Activated CD4-positive, alpha-beta T cell treated with anti-CD3 and anti-CD28 coated beads for 36 hours (primary cell): ENCODE measurements at regions of chr3 and their contacts with region 1.

Region 1: GRCh38 chr3:39189959-39190269 is 2.5 kb downstream of the XIRP1 start:
- DNase-seq: peak; percentile 72
- ATAC-seq: peak; percentile 64
- H3K4me3 Mint-ChIP-seq: no peak overlapping the region
- H3K27ac Mint-ChIP-seq: no peak overlapping the region
- H3K4me1 Mint-ChIP-seq: peaks cover 28% of the 10 kb centered on the region
- H3K27me3 Mint-ChIP-seq: no peaks in the 10 kb centered on the region

Region 2: GRCh38 chr3:38811822-38812221 is 378.1 kb before region 1 on chr3:
- CTCF ChIA-PET with region 1: no interaction called
- POLR2A ChIA-PET with region 1: no interaction called
- intact Hi-C with region 1: no loop called
- DNase-seq: no peak
- ATAC-seq: no peak
- H3K4me3 Mint-ChIP-seq: no peak overlapping the region
- H3K27ac Mint-ChIP-seq: no peak overlapping the region
- H3K4me1 Mint-ChIP-seq: no peaks in the 10 kb centered on the region
- H3K27me3 Mint-ChIP-seq: peaks cover 13% of the 10 kb centered on the region

Region 3: DNA sequence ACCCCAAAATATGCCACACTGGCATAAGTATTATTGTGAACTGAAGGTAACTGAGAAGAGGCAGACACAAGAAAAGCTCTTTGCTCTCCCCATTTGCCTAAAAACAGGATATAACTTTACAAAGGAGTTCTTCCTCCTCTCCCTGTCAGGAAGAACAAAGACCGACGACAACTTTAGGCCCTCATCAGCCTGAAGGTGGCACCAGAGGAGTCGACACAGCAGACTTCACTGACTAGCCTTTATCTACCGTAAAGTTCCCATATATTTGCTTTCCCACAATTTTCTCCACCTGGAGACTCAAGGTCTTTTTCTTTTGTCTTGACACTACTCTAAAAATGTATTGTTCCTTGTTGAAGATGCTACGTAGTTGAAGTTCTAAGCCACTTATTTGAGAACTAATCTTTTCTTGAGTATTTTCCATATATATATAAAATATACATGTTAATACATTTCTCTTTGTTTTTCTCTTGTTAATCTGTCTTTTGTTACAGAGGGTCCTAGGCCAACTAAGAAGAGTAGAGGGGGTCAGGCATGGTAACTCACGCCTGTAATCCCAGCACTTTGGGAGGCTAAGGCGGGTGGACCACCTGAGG is 18.6 kb after region 1 on chr3:
- CTCF ChIA-PET with region 1: interaction called, 17 read pairs
- POLR2A ChIA-PET with region 1: no interaction called
- intact Hi-C with region 1: no loop called
- DNase-seq: peak; percentile 61
- ATAC-seq: no peak
- H3K4me3 Mint-ChIP-seq: no peak overlapping the region
- H3K27ac Mint-ChIP-seq: no peak overlapping the region
- H3K4me1 Mint-ChIP-seq: peaks cover 7% of the 10 kb centered on the region
- H3K27me3 Mint-ChIP-seq: no peaks in the 10 kb centered on the region

Region 4: DNA sequence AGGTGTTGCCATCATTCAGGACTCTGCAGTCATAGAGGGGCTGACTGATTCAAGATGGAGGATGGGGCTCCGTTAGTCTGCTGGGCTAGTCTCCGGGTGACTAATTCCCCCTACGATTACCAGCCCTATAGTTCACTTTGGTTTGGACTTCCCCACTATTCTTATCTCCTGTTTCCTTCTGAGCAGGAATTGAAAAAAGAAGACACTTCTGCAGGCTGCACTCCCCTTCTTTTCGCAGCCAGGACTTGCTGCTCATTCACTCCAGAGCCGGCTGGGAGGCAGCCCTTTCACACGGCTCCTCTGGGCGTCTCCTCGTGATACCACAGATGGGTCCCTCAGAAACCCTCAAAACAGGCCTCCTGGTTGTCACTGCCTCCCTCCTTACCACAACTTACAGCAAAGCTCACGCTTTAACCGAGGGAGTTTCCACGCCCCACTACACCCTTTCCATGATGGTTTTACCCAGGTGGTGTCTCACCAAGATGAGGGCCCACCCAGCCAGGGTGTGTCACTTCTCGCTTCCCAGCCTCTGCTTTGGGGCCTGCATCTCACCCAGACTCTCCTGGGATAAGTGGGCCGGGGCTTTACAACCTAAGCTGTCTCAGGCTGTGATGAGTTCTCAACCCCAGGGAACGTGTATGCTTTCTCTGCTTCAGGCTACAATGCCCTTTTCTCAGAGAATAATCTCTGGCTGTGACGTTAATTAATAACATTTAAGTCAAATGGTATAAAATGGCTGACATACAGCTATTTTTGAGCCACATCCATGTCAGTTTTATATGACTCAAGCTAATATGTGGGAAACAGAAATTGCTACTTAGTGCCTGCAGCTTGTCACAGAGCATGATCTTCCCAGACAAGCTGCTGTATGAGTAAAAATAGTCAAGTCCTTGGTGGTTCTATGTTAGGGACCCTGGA is 78.0 kb after region 1 on chr3:
- CTCF ChIA-PET with region 1: interaction called, 15 read pairs
- POLR2A ChIA-PET with region 1: no interaction called
- intact Hi-C with region 1: loop called in 1 of 2 experiments (anchors 5 kb)
- DNase-seq: peak; percentile 84
- ATAC-seq: peak; percentile 88
- H3K4me3 Mint-ChIP-seq: peak overlapping the region; percentile 39
- H3K27ac Mint-ChIP-seq: peak overlapping the region; percentile 94
- H3K4me1 Mint-ChIP-seq: peaks cover 26% of the 10 kb centered on the region
- H3K27me3 Mint-ChIP-seq: no peaks in the 10 kb centered on the region

Region 5: GRCh38 chr3:39378088-39378487 is 188.2 kb after region 1 on chr3:
- CTCF ChIA-PET with region 1: interaction called, 19 read pairs
- POLR2A ChIA-PET with region 1: no interaction called
- intact Hi-C with region 1: loop called (anchors 2 to 5 kb)
- DNase-seq: peak; percentile 77
- ATAC-seq: peak; percentile 84
- H3K4me3 Mint-ChIP-seq: no peak overlapping the region
- H3K27ac Mint-ChIP-seq: no peak overlapping the region
- H3K4me1 Mint-ChIP-seq: peaks cover 10% of the 10 kb centered on the region
- H3K27me3 Mint-ChIP-seq: no peaks in the 10 kb centered on the region

Region 6: GRCh38 chr3:39414421-39414907 is 224.6 kb after region 1 on chr3:
- CTCF ChIA-PET with region 1: no interaction called
- POLR2A ChIA-PET with region 1: interaction called, 10 read pairs
- intact Hi-C with region 1: no loop called
- DNase-seq: peak; percentile 18
- ATAC-seq: peak; percentile 24
- H3K4me3 Mint-ChIP-seq: no peak overlapping the region
- H3K27ac Mint-ChIP-seq: peak overlapping the region; percentile 58
- H3K4me1 Mint-ChIP-seq: peaks cover 25% of the 10 kb centered on the region
- H3K27me3 Mint-ChIP-seq: peaks cover 3% of the 10 kb centered on the region